ENCODE measurements at regions of chr16 and their contacts with region 1.

Region 1: GRCh38 chr16:51579652-51580360 is 428.7 kb upstream of the SALL1 start:
- DNase-seq: no peak
- H3K4me3 ChIP-seq: no peak overlapping the region
- H3K27ac ChIP-seq: no peak overlapping the region
- H3K4me1 ChIP-seq: no peaks in the 10 kb centered on the region
- H3K27me3 ChIP-seq: no peaks in the 10 kb centered on the region
- CTCF ChIP-seq: no peak
- EP300 ChIP-seq: no peak
- POLR2A ChIP-seq: no peak

Region 2: DNA sequence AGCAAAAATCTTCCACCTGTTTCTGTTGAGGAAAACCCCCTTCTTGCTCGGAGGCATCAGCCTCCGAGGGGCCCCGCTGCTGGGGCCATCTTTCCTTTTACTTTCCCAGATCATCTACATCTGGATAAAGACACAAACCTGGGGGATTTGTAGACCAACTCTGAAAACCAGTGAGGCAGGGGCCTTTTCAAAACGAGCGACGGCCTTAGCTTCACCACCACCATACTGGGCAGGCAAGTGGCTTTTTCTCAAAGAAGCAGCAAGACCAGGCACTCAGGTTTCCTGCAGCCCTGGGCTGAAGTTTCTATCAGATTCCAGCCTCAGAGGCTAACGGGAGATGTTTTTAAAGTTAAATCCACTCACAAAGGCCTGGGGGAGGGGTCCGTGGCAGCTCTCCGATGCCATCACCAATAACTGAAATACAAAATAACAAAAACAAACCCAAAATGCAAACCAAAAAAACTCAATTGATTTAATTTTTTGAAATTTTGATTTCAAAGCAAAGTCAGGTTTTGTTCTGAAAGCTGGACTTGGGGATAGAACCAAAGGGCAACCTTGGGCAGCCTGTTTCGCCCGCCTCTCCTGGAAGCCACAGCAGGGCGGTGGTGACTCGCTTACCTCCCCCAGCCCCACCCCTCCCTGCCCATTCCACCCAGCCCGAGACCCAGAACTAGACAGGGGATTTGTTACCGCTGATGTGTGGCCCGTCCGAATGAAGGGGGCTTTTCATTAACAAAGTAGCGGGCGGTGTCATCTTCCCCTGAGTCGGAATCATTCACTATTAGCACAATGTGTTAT is 484.5 kb before region 1 on chr16:
- intact Hi-C with region 1: no loop called
- DNase-seq: no peak
- H3K4me3 ChIP-seq: no peak overlapping the region
- H3K27ac ChIP-seq: no peak overlapping the region
- H3K4me1 ChIP-seq: no peaks in the 10 kb centered on the region
- H3K27me3 ChIP-seq: peaks cover 0 to 4% (median 0%) of the 10 kb centered on the region in 3 donors
- CTCF ChIP-seq: no peak
- EP300 ChIP-seq: no peak
- POLR2A ChIP-seq: no peak

Region 3: GRCh38 chr16:52976539-52977167 is 1396.8 kb after region 1 on chr16:
- intact Hi-C with region 1: loop called (anchors 10 kb)
- DNase-seq: no peak
- H3K4me3 ChIP-seq: no peak overlapping the region
- H3K27ac ChIP-seq: no peak overlapping the region
- H3K4me1 ChIP-seq: no peaks in the 10 kb centered on the region
- H3K27me3 ChIP-seq: no peaks in the 10 kb centered on the region
- CTCF ChIP-seq: peak in 2 of 4 experiments; percentile 24 to 28
- EP300 ChIP-seq: no peak
- POLR2A ChIP-seq: no peak